Left ventricle myocardium inferior (tissue), 1 donor: ENCODE measurements at regions of chr11 and their contacts with region 1.

Region 1: DNA sequence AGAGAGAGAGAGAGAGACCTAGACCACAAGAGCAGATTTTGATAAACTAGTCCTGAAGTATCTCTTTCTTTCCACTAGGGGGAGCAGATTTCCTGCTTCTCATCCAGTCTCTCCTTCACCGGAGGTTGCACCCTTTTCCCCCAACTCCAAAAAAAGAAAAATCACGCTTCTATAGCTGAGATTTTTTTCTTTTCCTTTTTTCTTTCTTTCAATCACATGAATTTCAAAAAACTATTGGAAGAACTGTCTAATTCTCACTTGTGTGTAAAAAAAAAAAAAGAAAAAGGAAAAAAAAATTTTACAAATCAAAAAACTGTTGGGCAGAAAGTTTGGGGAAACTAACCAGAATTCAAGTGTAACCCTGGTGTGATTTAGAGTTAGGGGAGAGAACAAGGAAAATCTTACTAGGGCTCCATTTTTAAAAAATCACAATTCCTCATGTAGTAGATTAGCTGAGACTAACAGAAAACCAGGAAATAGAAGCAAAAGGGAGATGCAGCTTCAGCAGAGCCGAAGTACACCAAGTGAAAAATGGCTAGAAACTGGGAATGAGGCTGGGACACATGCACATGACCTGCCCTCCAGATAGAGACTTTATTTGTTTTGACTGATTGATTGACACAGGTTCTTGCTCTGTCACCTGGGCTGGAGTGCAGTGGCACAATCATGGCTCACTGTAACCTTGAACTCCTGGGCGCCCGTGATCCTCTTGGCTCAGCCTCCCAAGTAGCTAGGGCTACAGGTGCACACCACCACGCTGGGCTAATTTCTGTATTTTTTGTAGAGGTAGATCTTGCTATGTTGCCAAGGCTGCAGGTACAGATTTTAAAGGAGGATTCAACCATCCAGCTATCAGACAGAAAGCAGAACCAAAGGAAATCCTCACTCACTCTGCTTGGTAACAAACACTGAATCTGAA is 27.1 kb downstream of the SDHD start:
- DNase-seq: no peak
- H3K4me3 ChIP-seq: peak overlapping the region; percentile 21
- H3K27ac ChIP-seq: no peak overlapping the region
- H3K4me1 ChIP-seq: peaks cover 5% of the 10 kb centered on the region
- H3K27me3 ChIP-seq: no peaks in the 10 kb centered on the region
- CTCF ChIP-seq: peak; percentile 78

Region 2: DNA sequence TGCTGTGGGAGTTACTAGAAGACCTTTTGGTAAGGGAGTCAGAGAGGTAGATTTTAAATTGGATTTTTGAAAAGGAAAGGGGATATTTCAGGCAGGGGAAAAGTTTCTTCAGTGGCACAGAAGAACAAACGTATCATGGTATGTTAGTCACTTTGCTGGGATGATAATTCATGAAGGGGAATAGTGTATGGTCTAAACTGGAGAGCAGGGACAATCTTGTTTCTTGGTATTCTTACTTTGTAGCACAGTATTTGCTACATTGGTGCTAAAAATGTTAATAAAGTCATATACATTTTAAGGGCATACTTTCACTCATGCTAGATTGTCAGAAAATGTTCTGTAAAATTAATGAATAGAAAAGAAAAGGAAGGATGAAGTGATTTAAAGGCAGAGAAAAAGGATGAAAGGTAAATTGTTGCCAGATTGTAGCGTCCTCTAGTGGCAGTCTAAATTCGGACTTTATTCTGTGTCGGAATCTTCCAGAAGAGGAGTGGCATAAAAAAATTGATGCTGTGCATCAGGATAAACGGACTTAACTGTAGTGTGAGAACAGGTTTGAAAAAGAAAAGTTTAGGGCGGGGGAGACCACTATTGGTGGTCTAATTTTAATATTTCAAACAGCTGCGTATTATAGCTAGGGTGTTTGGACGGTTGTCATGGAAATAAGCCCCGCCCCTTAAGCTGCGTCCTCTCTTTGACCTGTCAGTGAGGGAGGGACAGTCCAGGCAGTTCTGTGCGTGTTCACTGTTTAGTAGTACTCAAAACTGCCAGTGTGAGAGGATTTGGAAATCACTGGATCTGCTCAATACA is 61.2 kb after region 1 on chr11 and contains the start of gene BCO2:
- intact Hi-C with region 1: loop called (anchors 10 kb)
- DNase-seq: peak; percentile 84
- H3K4me3 ChIP-seq: peak within 1 kb of the TSS; percentile 65
- H3K27ac ChIP-seq: peak within 1 kb of the TSS; percentile 86
- H3K4me1 ChIP-seq: peaks cover 32% of the 10 kb centered on the region
- H3K27me3 ChIP-seq: no peaks in the 10 kb centered on the region
- CTCF ChIP-seq: peak; percentile 79
- total RNA-seq, gene BCO2: 169 TPM